ENCODE measurements at regions of chr12 and their contacts with region 1.

Region 1: DNA sequence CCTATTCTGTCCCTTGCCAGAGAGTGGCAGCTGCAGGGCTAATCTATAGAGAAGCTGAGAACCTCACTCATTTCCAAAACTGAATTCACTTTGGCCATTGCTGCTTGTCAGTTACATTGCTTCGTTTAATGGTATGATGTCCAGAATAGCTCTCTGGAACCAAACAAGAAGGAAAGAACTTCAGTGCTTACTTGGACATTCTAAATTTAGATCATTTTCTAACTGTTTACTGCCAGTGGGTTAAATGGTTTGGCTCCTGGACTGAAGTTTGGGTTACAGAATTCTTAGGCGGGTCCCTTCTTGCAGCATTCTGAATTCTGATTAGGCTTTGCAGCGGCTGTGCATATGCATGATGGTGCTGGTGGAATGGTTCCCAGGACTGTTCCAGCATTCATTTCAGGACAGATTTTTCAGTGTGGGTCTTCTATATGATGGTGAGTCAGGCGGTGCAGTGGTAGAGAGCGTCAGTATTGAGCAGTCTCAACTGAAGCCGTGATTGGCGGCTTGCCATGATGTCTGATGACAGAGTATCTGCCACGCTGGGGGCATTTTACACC is 148.7 kb downstream of the DYRK2 start:
- DNase-seq: peak in 1 of 2 donors; percentile 14
- ATAC-seq: peak; percentile 29 to 88 (median 78)
- H3K4me3 ChIP-seq: peak overlapping the region in 3 of 10 donors; percentile 1 to 12 (median 2)
- H3K27ac ChIP-seq: peak overlapping the region in 8 of 10 donors; percentile 10 to 66 (median 52)
- H3K4me1 ChIP-seq: peaks cover 0 to 37% (median 12%) of the 10 kb centered on the region in 9 donors
- H3K27me3 ChIP-seq: no peaks in the 10 kb centered on the region
- CTCF ChIP-seq: no peak

Region 2: GRCh38 chr12:67732857-67733256 is 64.4 kb before region 1 on chr12:
- intact Hi-C with region 1: loop called in 1 of 10 experiments (anchors 10 kb)
- DNase-seq: no peak
- ATAC-seq: no peak
- H3K4me3 ChIP-seq: no peak overlapping the region
- H3K27ac ChIP-seq: no peak overlapping the region
- H3K4me1 ChIP-seq: peaks cover 0 to 21% (median 3%) of the 10 kb centered on the region in 9 donors
- H3K27me3 ChIP-seq: no peaks in the 10 kb centered on the region
- CTCF ChIP-seq: no peak